ENCODE measurements at regions of chr3 and their contacts with region 1.

Region 1: DNA sequence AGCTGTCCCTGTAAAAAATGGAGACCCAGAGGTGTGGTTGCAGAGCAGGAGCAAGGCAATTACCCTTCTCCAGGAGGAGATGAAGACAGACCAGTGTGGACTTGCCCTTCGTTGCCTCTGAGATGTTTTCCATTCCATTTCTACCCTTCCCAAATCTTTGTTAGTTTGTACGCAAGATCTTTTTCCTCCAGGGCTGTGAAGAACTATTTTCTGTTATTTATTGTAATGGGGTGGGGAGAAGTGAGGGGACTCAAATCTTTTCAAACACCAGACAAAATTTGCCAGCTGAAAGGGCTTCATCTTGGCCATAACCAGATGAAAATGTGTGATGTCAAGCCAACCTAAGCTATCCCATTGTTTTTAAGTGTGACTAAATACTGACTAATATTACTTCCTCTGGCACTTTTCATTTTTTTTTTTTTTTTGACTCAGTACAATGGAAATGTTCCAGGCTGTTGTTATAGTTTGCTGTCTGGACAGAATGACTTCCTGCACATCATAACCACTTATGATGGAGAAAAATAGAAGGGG is 271.3 kb upstream of the TPRG1 start:
- DNase-seq: peak; percentile 87
- H3K4me3 Mint-ChIP-seq: peak overlapping the region; percentile 12
- H3K27ac Mint-ChIP-seq: peak overlapping the region; percentile 80
- H3K4me1 Mint-ChIP-seq: peaks cover 52% of the 10 kb centered on the region
- H3K27me3 Mint-ChIP-seq: no peaks in the 10 kb centered on the region
- CTCF ChIP-seq: no peak

Region 2: DNA sequence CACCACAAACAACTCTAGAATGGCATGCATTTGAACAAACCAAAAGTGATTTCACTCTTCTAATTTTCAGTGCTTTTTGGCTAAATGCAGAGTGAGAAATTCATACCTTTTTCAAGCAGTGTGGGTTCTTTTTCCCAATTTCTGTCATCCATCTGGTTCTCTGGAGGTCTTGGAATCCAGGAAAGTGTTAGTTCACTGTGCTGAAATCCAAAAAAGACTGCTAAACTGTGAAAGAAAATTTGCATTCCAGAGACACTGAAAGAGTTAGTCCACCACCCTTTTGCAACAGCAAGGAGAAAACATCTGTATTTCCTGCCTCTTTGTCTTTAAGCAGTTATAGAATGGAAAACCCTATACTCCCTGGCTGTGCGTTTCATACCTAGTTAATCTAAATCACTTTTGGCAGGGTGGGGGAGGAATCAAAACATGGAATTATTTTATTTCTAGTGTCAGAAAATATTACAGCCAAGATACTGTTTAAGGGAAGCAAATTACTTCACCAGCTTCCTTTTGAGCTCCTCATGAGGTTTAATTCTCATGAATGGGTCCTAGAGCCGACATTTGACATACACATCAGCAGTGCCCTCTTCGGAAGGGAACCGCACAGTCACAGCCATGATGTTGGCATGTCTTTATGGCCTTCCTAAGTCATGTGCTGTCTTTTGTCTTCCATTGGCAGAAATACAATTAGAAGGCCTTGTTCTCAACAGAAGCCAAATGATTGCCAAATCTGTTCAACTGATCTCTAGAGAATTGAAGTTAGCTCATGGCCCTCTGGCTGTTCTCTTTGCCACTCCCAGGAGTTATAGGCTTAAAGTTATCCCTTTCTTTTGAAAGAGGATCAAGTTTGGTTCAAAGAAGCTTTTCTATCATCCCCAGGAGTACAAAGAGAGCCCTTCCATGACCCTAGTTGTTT is 46.4 kb before region 1 on chr3:
- CTCF ChIA-PET with region 1: no interaction called
- POLR2A ChIA-PET with region 1: interaction called, 15 read pairs
- intact Hi-C with region 1: no loop called
- DNase-seq: peak; percentile 73
- H3K4me3 Mint-ChIP-seq: peak overlapping the region; percentile 50
- H3K27ac Mint-ChIP-seq: peak overlapping the region; percentile 87
- H3K4me1 Mint-ChIP-seq: peaks cover 26% of the 10 kb centered on the region
- H3K27me3 Mint-ChIP-seq: no peaks in the 10 kb centered on the region
- CTCF ChIP-seq: no peak

Region 3: DNA sequence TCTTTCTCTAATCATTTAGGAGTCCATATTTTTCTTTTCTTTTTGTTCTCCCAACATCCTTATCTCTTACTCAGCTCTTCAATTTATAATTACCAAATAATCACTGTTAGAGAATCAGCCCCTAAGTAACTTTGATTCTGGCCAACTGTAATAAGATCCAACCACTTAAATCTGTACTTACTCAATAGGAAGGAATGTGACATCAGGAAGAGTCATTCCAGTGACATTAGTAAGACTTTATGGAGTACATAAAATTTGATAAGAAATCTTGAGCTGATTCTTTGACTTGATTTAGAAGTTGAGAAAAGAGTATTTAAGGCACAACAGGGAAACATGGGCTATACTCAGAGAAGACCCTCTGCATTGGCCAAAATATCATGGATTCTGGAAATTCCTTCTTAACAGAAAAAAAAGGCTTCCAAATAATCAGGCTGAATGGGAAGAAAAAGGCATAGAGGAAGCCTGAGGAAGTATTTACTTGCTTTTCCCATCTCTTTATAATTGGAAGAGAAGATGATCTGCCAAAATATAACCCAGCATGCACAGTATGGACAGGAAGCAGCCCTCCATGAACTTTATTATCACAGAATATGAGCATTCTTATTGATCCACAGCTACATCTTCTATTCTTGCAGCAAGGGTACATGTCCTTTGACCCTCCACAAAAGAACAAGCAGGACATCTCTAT is 18.4 kb before region 1 on chr3:
- CTCF ChIA-PET with region 1: interaction called, 4 read pairs
- POLR2A ChIA-PET with region 1: interaction called, 23 read pairs
- intact Hi-C with region 1: no loop called
- DNase-seq: peak; percentile 54
- H3K4me3 Mint-ChIP-seq: no peak overlapping the region
- H3K27ac Mint-ChIP-seq: peak overlapping the region; percentile 93
- H3K4me1 Mint-ChIP-seq: peaks cover 15% of the 10 kb centered on the region
- H3K27me3 Mint-ChIP-seq: no peaks in the 10 kb centered on the region
- CTCF ChIP-seq: no peak